GM18951 (cell line): ENCODE measurements at regions of chr15 and their contacts with region 1.

Region 1: GRCh38 chr15:90165659-90166421 is 35.3 kb upstream of the SEMA4B start:
- POLR2A ChIP-seq: no peak

Region 2: GRCh38 chr15:89820666-89821611 is 344.9 kb before region 1 on chr15:
- in situ Hi-C with region 1: no loop called
- POLR2A ChIP-seq: no peak

Region 3: DNA sequence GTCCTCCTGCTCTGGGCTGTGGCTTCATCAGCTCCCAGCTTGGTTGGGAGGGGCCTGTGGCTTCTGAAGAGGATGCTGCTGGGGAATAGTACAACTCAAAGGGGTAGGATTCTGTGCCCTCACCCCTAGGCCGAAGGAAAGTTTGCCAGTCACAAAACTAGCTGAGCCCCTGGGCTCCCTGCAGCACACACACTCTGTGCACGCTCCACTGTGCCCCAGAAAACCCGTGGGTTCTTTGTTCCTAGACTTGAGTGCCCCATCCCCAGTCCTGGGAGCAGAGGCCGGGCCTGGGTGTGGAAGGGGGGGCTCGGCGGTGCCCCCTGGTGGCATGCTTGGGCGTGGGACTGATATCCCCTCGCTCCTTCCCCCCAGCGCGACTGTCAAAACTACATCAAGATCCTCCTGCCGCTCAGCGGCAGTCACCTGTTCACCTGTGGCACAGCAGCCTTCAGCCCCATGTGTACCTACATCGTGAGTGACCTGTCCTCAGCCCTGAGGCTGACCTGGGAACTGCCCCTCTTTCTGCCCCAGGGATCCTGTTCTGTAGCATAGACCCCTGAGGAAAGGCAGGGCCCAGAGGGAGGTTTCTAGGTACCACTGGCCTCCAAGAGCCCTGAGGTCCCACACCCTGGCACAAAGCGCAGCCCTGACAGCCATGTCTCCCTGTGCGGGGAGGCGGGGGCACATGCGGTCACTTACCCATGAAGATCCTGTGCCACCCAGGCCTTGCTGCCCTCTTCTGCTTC is 53.8 kb after region 1 on chr15:
- in situ Hi-C with region 1: loop called (anchors 5 kb)
- POLR2A ChIP-seq: no peak

Region 4: GRCh38 chr15:90286678-90287077 is 120.8 kb after region 1 on chr15:
- in situ Hi-C with region 1: loop called (anchors 10 kb)
- POLR2A ChIP-seq: no peak